WTC11 (cell line): ENCODE measurements at regions of chr12 and their contacts with region 1.

Region 1: DNA sequence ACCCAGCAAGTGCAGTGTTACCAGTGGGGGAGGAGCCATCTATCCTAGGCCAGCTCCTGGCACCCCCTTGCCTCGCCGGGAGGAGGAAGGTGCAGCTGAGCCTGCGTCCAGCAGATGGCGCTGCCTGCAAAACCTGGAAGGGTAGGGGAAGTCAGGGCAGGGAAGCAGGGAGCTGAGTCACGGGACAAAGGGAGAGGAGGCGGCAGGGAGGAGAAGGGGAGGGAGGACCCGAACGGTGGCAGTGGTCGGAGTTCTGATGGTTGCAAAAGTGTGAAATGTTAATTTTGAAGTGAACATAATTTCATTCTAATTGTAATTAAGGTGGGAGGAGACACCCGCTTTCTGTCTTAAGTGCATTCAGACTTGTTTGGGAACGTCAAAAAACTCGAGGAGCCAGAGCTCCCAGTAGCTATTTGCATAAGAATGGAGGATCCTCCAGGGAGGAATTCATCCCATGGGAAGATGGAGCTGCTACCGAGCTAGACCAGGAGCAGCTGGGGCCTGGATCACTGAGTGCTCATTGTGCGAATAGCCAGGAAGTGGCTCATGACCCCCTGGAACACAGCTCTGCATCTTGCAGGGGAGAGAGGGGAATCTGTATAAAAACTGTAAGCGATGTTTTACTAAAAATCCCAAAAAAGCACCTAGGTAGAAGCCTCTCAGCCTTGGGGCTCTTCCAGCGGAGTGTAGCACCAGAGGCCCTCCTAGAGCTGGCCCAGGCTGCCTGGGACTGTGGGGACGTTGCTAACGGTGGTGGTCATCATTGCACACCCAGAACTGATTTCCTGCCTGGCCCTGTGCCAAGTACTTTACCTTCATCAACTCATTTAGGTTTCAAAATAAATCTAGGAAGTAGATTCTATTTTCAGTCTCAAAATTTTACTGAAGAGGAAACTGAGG is 59.5 kb downstream of the EMP1 start:
- DNase-seq: peak; percentile 98
- ATAC-seq: peak; percentile 93
- H3K4me3 Mint-ChIP-seq: peak overlapping the region; percentile 53
- H3K27ac Mint-ChIP-seq: peak overlapping the region; percentile 94
- H3K4me1 Mint-ChIP-seq: peaks cover 32% of the 10 kb centered on the region
- H3K27me3 Mint-ChIP-seq: peaks cover 21% of the 10 kb centered on the region
- CTCF ChIP-seq: peak; percentile 94

Region 2: DNA sequence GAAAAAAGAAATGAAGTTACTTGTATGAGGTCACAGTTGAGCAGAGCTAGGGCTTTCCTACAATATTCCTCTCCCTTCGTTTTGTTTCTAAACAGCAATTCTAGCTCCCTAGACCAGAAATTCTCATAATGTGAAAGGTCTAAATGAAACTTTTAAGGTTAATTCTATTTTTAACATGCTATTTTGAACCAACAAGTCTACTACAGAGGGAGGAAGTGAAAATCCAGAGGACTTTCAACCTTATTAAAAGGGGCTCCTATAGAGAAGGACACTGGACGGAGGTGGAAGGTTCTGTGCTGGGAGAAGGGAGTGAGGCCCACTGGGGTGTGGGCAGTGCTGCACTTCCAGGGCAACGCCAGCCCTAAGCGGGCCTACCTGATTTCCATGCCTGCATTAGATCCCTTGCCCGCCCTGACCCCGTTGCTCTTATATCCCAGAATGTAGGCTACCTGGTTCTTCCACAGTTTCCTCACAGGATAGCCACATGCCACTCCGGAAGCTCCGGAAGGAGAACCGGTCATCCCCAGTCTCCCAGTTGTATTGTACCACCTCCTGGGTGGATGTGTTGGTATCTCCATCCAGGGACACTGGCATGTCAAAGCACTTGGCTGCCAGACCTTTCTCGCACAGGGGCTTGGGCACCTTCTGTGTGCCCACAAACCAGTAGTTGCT is 165.9 kb before region 1 on chr12:
- CTCF ChIA-PET with region 1: interaction called, 11 read pairs
- POLR2A ChIA-PET with region 1: no interaction called
- DNase-seq: no peak
- ATAC-seq: no peak
- H3K4me3 Mint-ChIP-seq: no peak overlapping the region
- H3K27ac Mint-ChIP-seq: no peak overlapping the region
- H3K4me1 Mint-ChIP-seq: peaks cover 71% of the 10 kb centered on the region
- H3K27me3 Mint-ChIP-seq: no peaks in the 10 kb centered on the region
- CTCF ChIP-seq: no peak

Region 3: GRCh38 chr12:13148064-13148847 is 107.8 kb before region 1 on chr12:
- CTCF ChIA-PET with region 1: no interaction called
- POLR2A ChIA-PET with region 1: no interaction called
- DNase-seq: no peak
- ATAC-seq: no peak
- H3K4me3 Mint-ChIP-seq: no peak overlapping the region
- H3K27ac Mint-ChIP-seq: no peak overlapping the region
- H3K4me1 Mint-ChIP-seq: peaks cover under 1% of the 10 kb centered on the region
- H3K27me3 Mint-ChIP-seq: no peaks in the 10 kb centered on the region
- CTCF ChIP-seq: no peak

Region 4: DNA sequence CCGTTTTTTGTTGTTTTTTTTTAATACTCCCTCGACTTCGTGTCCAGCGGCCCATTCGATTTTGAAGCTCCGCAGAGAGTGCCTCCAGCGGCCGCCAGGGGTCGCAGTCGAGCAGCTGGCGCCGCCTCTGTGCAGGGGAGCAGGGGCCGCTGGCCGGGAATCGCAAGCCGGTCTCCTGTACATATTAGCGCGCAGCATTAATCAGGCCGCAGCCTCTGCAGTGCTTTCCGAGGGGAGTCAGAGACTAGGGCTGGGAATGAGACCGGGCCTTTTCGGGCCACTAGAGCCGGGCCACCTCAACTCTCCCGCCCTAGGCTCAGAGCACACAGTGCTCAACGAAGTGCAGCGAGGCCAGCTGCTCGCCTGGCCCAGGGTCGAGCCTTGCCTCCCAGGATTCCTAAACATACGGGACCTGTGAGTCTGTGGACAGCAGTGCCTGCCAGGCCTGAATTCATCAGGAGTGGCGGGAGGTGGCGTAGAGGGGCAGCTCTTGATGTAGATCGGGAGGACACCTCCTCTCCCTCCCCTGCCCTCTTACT is 22.3 kb after region 1 on chr12:
- CTCF ChIA-PET with region 1: interaction called, 118 read pairs
- POLR2A ChIA-PET with region 1: interaction called, 6 read pairs
- DNase-seq: peak; percentile 83
- ATAC-seq: peak; percentile 90
- H3K4me3 Mint-ChIP-seq: peak overlapping the region; percentile 24; the same call in 1 of the 2 replicates
- H3K27ac Mint-ChIP-seq: no peak overlapping the region
- H3K4me1 Mint-ChIP-seq: peaks cover 28% of the 10 kb centered on the region
- H3K27me3 Mint-ChIP-seq: no peaks in the 10 kb centered on the region; the same call in none of the 2 replicates
- CTCF ChIP-seq: peak; percentile 99

Region 5: DNA sequence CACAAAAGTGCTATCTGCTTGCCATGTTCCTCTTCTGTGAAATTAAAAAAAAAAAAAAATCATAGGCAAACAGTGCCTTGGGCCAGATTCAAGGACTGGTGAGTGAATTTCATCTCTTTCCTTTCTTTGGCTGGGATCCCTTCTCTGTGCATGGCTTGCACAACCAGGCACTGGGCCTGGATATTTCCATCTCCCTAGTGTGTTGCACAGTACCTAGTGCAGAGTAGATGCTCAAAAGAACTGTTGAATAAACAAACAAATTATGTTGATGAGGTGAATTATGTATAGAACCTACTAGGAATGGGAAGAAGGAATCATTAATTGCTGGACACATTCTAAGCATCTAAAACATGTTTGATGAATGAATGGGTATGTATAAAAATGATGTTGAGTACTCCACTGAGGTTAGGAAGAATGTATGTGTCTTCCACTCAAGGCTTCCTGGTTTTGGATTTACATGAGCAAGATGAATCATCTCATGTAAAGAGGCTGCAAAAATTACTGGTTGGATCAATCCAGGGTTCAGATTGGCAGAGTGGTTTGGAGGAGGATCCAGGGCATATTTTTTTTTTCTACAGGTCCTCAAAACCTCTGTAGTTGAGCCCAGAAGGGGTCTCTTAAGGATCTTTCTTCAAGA is 33.7 kb after region 1 on chr12:
- CTCF ChIA-PET with region 1: no interaction called
- POLR2A ChIA-PET with region 1: no interaction called
- DNase-seq: no peak
- ATAC-seq: no peak
- H3K4me3 Mint-ChIP-seq: no peak overlapping the region
- H3K27ac Mint-ChIP-seq: no peak overlapping the region
- H3K4me1 Mint-ChIP-seq: no peaks in the 10 kb centered on the region
- H3K27me3 Mint-ChIP-seq: no peaks in the 10 kb centered on the region
- CTCF ChIP-seq: no peak

Region 6: DNA sequence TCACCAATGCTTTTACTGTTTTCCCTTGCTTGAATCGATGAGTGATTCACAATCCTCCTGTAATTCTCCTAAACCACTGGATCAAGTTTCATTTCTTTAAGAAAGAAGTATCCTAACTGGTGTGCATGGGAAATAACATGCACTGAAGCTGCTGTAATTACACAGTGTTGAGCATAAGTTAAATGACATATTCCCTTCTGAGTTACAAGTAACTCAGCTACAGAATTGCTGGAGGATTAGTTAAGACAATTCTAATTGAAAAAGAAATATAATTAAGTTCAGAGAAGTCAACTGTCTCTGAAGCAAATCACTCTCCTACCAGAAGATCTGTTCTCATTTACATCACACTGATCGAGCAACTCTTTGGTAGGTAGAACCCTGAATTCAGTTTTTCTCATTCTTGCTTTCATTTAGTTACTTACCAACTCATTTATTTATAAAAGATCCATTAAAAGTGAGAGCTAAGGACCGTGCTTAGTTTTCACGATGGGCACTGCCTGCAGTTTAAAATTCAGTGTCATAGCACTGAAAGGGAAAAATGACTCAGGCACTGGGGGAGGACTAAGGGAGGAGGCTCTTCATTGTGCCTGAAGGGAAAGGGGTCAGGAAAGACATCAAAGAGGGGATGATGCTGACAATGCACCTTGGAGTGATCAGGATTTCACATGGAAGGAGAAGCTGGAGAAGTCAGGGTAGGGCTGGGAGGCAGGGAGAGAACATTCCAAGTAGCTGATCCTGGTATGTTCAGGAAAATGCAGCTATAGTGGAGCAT is 267.7 kb after region 1 on chr12:
- CTCF ChIA-PET with region 1: interaction called, 10 read pairs
- POLR2A ChIA-PET with region 1: no interaction called
- DNase-seq: no peak
- ATAC-seq: no peak
- H3K4me3 Mint-ChIP-seq: no peak overlapping the region
- H3K27ac Mint-ChIP-seq: no peak overlapping the region
- H3K4me1 Mint-ChIP-seq: no peaks in the 10 kb centered on the region
- H3K27me3 Mint-ChIP-seq: peaks cover 5% of the 10 kb centered on the region; the same call in 1 of the 2 replicates
- CTCF ChIP-seq: no peak

Region 7: DNA sequence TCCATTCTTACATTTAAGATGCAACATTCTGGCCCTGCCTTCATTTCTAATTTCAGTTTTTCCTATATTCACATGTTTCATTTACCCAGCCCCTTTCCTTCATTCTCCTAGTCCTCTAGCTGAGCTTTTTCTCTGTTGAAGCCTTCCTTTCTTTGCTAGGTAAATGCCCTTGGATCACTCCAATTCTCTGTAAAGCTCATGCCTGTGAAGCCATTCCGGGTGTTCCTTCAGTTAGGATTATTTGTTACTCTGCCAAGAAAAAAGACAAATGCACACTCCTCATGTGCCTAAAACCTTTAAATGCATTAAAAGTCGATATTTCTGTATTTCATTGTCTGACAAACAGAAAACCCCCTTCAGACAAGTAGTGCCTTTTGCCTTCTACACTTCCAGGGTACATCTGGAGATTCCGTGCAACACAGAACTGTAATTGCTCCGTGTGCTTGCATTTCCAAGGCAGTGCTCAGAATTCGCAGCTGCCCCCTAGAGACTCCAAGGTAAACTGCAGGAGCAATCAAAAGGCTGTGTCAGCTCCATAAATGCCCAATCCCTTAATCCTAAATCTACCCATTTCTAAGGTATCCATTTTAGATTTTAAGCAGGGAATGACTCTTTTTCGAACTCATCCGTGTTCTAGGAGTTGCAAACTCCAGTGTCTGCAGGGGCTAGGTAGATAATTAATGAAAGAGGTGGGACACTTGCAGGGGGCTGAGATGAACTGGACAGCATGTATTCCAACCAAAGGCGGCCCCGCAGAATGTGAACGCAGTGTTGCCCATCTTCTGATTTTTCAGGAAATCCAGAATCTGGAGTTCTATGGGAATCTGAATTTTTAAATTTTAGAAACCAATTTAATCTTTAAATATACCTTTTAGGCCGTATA is 405.2 kb after region 1 on chr12:
- CTCF ChIA-PET with region 1: interaction called, 21 read pairs
- POLR2A ChIA-PET with region 1: no interaction called
- DNase-seq: peak; percentile 62
- ATAC-seq: peak; percentile 98
- H3K4me3 Mint-ChIP-seq: no peak overlapping the region
- H3K27ac Mint-ChIP-seq: no peak overlapping the region
- H3K4me1 Mint-ChIP-seq: peaks cover 6% of the 10 kb centered on the region; the same call in 1 of the 2 replicates
- H3K27me3 Mint-ChIP-seq: peaks cover 3% of the 10 kb centered on the region; the same call in 1 of the 2 replicates
- CTCF ChIP-seq: peak; percentile 81

Region 8: DNA sequence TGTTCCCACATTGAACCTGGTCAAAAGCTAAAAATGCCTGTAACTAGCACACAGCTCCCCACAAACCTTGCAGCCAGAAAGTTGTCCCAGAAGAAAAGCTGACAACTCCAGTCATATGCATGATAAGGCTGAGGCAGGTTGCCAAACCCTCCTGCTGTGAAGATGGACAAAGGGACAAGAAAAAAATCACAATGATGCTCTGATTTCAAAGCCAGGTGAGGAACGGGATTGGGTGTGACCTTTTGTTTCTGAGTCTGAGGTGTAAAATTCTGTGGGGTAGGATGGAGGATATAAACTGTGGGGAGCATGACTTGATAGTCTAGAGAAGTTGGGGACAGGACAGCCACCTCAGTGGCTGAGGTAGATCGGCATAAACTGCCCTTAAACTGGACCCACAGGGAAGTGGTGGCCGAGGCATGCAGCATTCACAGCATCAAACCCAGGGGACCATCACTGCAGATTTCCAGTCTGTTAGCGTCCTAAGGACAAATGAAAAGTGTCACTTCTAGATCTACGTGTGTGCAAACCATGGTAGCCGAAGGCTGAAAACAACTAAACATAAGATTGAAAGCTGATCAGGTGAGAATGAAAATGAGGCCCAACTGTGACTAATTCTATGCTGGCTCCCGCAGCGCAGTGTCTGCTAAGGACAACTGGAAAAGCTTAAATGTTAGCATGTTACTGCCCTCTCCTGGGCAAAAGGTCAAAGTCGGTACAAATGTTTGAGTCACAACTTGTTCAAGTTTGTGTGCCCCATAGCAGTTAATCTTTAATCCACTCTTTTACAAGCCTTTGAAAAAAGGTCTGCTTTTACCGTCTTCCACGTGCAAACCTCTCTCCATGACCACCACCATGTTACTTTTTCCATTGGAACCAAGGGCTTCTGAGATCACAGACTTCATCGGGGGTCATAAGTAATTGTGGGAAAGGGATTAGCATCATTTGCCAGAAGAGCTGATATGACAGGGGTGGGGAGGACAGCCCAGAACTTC is 685.5 kb after region 1 on chr12:
- CTCF ChIA-PET with region 1: interaction called, 23 read pairs
- POLR2A ChIA-PET with region 1: no interaction called
- DNase-seq: peak; percentile 74
- ATAC-seq: peak; percentile 85
- H3K4me3 Mint-ChIP-seq: peak overlapping the region; percentile 38
- H3K27ac Mint-ChIP-seq: peak overlapping the region; percentile 38; the same call in 1 of the 2 replicates
- H3K4me1 Mint-ChIP-seq: peaks cover 30% of the 10 kb centered on the region
- H3K27me3 Mint-ChIP-seq: no peaks in the 10 kb centered on the region
- CTCF ChIP-seq: peak; percentile 27

Region 9: GRCh38 chr12:13970803-13971202 is 714.8 kb after region 1 on chr12:
- CTCF ChIA-PET with region 1: no interaction called
- POLR2A ChIA-PET with region 1: no interaction called
- DNase-seq: no peak
- ATAC-seq: peak; percentile 51
- H3K4me3 Mint-ChIP-seq: no peak overlapping the region
- H3K27ac Mint-ChIP-seq: no peak overlapping the region
- H3K4me1 Mint-ChIP-seq: peaks cover 23% of the 10 kb centered on the region
- H3K27me3 Mint-ChIP-seq: peaks cover 4% of the 10 kb centered on the region
- CTCF ChIP-seq: no peak